A549 (cell line): ENCODE measurements at regions of chr2 and their contacts with region 1.

Region 1: DNA sequence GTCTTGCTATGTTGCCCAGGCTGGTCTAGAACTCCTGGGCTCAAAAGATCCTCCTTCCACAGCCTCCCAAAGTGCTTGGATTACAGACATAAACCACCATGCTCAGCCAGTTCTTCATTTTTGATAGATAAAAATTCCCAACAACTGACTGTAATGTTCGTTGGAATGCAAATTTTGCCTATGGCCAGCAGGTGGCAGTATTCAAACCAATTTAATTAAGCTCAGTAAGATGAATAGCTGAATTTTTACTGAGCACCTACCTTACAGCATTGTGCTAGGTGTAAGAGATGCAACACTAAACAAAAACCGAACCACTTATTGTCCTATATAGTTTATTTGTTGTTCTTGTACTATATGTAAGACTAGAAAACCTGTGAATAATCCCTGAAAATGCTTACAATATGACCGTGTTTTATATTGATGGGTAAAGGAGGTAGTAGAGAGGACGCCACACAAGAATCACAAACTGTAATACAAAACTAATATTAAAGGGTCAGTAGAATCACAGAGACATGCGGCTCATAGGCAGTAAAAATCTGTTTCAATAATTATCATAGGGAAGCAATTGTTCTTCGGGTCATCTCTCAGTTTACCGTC is 8.2 kb upstream of the TMEM182 start:
- DNase-seq: peak; percentile 15 to 53
- ATAC-seq: peak; percentile 68 to 74; a peak in 4 of 6 replicates
- H3K4me3 ChIP-seq: no peak overlapping the region
- H3K27ac ChIP-seq: no peak overlapping the region
- H3K4me1 ChIP-seq: no peaks in the 10 kb centered on the region
- CTCF ChIP-seq: peak; percentile 76
- EP300 ChIP-seq: no peak
- POLR2A ChIP-seq: no peak
- RAD21 ChIP-seq: peak in 1 of 2 experiments; percentile 33; a peak in 2 of 5 replicates

Region 2: DNA sequence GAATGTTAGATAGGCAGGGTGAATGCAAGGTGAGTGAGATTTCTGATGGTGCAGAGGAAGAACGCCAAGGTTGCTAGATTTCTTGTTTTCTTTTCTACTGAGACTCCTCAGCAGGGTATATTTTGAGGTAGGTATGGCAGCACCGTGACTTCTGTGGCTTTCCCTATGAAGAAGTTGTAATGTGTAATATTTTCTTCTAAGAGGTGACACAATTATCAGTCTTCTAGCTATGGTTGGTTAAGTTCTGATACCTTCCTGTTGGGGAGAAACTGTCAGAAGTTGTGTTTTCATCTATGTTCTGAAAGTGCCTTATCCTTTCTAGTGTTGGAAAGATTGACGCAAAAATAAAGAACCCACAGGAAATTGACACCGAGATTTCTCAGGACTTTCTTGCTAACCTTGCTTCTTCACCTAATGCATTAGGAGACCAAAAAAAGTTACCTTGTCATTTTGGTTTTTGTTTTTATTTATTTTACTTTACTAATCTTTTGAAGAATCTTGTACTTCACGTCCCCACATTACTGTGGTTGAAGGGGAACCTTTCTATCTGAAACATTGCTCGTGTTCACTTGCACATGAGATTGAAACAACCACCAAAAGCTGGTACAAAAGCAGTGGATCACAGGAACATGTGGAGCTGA is 386.2 kb before region 1 on chr2:
- CTCF ChIA-PET with region 1: no interaction called
- POLR2A ChIA-PET with region 1: no interaction called
- DNase-seq: no peak
- ATAC-seq: no peak
- H3K4me3 ChIP-seq: no peak overlapping the region
- H3K27ac ChIP-seq: no peak overlapping the region
- H3K4me1 ChIP-seq: no peaks in the 10 kb centered on the region
- CTCF ChIP-seq: no peak
- EP300 ChIP-seq: no peak
- POLR2A ChIP-seq: no peak
- RAD21 ChIP-seq: no peak

Region 3: DNA sequence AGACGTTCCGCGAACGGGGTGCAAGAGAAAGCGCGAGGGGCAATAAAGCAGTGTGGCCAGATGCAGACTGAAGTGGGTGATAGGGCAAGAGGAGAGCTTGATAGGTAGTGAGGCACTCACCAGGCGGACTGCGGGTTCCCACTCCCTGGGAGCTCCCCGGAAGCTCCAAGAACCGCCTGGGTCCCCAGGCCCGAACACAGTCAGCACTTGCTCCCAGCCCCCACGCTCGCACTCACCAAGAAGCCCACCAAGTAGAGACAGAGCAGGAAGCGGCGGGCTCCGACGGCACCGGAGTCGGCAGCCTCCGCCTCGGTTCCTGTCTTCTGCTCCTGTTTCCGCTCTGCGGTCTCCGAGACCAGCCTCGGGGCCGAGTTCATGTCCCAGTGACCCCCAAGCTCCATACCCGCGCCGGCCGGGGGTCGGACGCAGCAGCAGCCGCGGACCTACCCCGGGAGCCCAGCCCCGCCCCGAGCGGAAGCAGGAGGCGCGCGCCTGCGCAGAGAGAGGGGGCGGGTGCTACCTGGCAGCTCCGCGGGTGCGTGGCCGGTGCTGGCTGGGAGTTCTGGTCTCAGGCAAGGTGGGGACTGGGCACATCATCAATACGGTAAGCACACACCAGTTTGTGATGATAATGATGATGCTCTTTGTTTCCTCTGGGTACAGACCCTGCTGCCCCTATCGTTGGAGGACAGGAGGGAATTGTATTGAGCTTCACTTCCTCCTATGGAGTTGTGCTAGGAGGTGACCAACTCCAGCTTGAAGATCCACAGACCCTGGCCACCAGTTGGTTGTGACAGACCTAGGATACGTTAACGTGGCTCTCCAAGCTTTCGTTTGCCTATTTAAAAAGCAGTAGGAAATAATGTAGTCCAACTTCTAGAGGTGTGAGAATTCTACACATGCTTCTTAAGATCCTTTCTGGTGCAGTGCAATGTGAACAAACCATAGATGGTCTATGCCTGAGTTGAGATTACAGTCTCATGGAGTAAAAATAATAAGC is 17.0 kb before region 1 on chr2:
- CTCF ChIA-PET with region 1: interaction called, 21 read pairs
- POLR2A ChIA-PET with region 1: no interaction called
- DNase-seq: peak; percentile 68
- ATAC-seq: peak; percentile 97 to 99
- H3K4me3 ChIP-seq: peak overlapping the region; percentile 91
- H3K27ac ChIP-seq: peak overlapping the region; percentile 90 to 93
- H3K4me1 ChIP-seq: peaks cover 12% of the 10 kb centered on the region; the same call in 2 of the 3 replicates
- CTCF ChIP-seq: no peak
- EP300 ChIP-seq: no peak
- POLR2A ChIP-seq: peak; percentile 97
- RAD21 ChIP-seq: no peak

Region 4: DNA sequence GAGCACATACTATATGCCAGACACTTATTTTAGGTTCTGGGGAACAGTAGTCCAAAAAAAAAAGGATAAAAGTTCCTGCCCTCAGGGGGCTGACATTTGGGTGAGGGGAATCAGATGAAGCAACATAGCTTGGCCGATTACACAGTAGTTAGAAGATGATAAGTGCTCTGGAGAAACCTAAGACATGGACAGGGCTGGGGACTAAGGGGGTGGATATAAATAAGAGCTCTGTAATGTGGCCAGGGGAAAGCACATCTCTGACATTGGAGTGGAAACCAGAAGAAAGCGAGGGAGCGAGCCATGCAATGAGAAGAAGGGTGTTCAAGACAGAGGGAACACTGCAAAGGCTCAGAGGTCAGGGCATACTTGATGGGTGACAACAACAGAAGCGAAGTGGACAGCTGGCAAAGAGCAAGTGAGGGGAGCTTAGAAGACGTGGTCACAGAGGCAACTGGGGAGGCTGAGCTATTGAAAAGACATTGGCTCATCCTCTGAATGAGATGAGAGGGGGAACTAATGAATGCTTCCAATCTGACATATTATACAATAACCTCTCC is 19.6 kb after region 1 on chr2:
- CTCF ChIA-PET with region 1: interaction called, 10 read pairs
- POLR2A ChIA-PET with region 1: no interaction called
- DNase-seq: no peak
- ATAC-seq: no peak
- H3K4me3 ChIP-seq: no peak overlapping the region
- H3K27ac ChIP-seq: no peak overlapping the region
- H3K4me1 ChIP-seq: no peaks in the 10 kb centered on the region
- CTCF ChIP-seq: no peak
- EP300 ChIP-seq: no peak
- POLR2A ChIP-seq: no peak
- RAD21 ChIP-seq: no peak